Caco-2 (cell line): ENCODE measurements at regions of chr19 and their contacts with region 1.

Region 1: DNA sequence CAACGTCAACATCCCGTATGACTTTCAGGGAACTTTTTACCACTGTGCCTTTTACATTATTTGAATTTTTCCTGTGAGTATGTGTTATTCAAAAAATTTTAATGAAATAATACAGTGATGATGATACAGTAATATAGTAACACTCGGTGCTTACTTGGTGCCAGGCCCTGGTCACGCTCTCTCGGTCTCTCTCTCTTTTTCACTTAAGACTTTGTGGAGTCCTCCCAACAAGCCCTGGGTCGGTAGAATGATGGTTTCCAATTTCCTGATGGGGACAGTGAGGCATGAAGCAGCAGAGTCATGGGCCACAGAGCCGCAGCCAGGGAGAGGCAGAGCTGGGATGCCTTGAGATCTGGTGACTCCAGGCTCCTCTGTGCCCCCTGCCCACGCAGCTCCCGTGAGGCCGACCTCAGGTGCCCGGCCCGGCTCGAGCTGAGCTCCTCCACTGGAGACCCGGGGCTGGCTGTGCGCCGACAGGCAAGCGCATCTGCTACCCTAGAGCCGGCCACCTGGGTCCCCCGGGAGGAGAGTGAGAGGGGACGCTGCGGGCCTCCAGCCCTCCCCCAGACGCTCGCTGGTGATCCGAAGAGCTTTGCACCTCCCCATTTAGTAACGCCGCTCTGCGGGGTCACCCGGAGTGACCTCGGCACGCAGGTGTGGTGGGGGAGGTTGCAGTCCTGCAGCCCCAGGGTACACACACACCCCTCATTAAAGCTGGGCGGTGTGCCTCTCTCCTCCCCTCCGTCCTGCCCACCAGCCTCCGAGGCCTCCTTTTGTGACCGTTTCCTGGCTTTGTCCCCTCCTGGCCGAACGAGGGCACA is 4.4 kb upstream of the SBK3 start:
- DNase-seq: peak; percentile 80 to 85
- H3K4me3 ChIP-seq: peak overlapping the region; percentile 35
- H3K4me3 Mint-ChIP-seq: peak overlapping the region; percentile 81
- H3K27ac Mint-ChIP-seq: peak overlapping the region; percentile 84
- H3K4me1 ChIP-seq: peaks cover 34% of the 10 kb centered on the region
- H3K4me1 Mint-ChIP-seq: peaks cover 50% of the 10 kb centered on the region
- H3K27me3 ChIP-seq: no peaks in the 10 kb centered on the region
- H3K27me3 Mint-ChIP-seq: no peaks in the 10 kb centered on the region
- CTCF ChIP-seq: peak; percentile 29 to 32

Region 2: GRCh38 chr19:55160128-55160985 is 389.4 kb before region 1 on chr19:
- CTCF ChIA-PET with region 1: no interaction called
- POLR2A ChIA-PET with region 1: interaction called, 19 read pairs
- intact Hi-C with region 1: no loop called
- DNase-seq: peak; percentile 95 to 97
- H3K4me3 ChIP-seq: no peak overlapping the region
- H3K4me3 Mint-ChIP-seq: no peak overlapping the region
- H3K27ac Mint-ChIP-seq: no peak overlapping the region
- H3K4me1 ChIP-seq: peaks cover 16% of the 10 kb centered on the region
- H3K4me1 Mint-ChIP-seq: peaks cover 20% of the 10 kb centered on the region
- H3K27me3 ChIP-seq: no peaks in the 10 kb centered on the region
- H3K27me3 Mint-ChIP-seq: peaks cover 3% of the 10 kb centered on the region
- CTCF ChIP-seq: peak; percentile 97

Region 3: GRCh38 chr19:55437410-55438075 is 112.2 kb before region 1 on chr19:
- CTCF ChIA-PET with region 1: no interaction called
- POLR2A ChIA-PET with region 1: no interaction called
- intact Hi-C with region 1: no loop called
- DNase-seq: peak; percentile 76 to 83
- H3K4me3 ChIP-seq: no peak overlapping the region
- H3K4me3 Mint-ChIP-seq: peak overlapping the region; percentile 23
- H3K27ac Mint-ChIP-seq: no peak overlapping the region
- H3K4me1 ChIP-seq: peaks cover 11% of the 10 kb centered on the region; the same call in 1 of the 2 replicates
- H3K4me1 Mint-ChIP-seq: no peaks in the 10 kb centered on the region
- H3K27me3 ChIP-seq: peaks cover 5% of the 10 kb centered on the region
- H3K27me3 Mint-ChIP-seq: peaks cover 23% of the 10 kb centered on the region
- CTCF ChIP-seq: no peak

Region 4: DNA sequence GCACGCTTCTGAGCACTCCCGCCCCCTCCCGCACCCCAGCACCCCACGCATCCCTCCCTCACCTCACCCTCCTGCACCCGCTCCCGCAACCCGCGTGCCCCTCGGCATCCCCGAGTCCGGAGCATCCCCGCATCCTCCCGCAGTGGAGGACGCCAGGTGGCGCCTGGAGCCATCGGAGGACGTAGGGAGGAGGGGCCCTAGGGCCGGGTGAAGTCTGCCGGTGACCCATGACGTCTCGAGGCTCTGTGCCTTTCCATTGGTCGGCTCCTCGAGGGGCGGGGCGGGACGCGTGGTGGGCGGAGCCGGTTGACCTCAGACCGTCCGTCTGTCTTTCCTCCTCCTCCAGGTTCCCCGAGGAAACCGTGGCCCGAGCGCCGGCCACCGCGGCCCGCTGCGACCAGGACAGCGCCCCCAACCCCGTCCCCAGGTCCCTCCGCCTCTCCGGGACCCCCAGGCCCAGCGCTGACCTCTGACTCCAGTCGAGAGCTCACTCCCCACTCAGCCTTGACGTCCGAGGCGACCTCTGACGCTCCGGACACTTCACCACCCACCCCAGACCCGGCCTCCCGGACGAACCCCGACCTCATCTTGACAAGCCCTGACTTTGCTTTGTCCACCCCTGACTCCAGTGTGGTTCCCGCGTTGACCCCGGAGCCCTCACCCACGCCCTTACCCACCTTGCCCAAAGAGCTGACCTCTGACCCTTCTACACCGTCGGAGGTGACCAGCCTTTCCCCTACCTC is 32.7 kb before region 1 on chr19:
- CTCF ChIA-PET with region 1: interaction called, 6 read pairs
- POLR2A ChIA-PET with region 1: interaction called, 3 read pairs
- intact Hi-C with region 1: loop called (anchors 1 kb)
- DNase-seq: peak; percentile 94 to 97
- H3K4me3 ChIP-seq: peak overlapping the region; percentile 31
- H3K4me3 Mint-ChIP-seq: peak overlapping the region; percentile 72
- H3K27ac Mint-ChIP-seq: peak overlapping the region; percentile 77
- H3K4me1 ChIP-seq: peaks cover 8% of the 10 kb centered on the region
- H3K4me1 Mint-ChIP-seq: no peaks in the 10 kb centered on the region
- H3K27me3 ChIP-seq: no peaks in the 10 kb centered on the region
- H3K27me3 Mint-ChIP-seq: peaks cover 5% of the 10 kb centered on the region
- CTCF ChIP-seq: peak; percentile 89 to 98

Region 5: GRCh38 chr19:55563261-55563690 is 13.6 kb after region 1 on chr19:
- CTCF ChIA-PET with region 1: no interaction called
- POLR2A ChIA-PET with region 1: no interaction called
- intact Hi-C with region 1: no loop called
- DNase-seq: no peak
- H3K4me3 ChIP-seq: no peak overlapping the region
- H3K4me3 Mint-ChIP-seq: no peak overlapping the region
- H3K27ac Mint-ChIP-seq: no peak overlapping the region
- H3K4me1 ChIP-seq: 0 out of 2 replicates have a peak, but pooled peaks cover 3% of the 10 kb centered on the region
- H3K4me1 Mint-ChIP-seq: no peaks in the 10 kb centered on the region
- H3K27me3 ChIP-seq: no peaks in the 10 kb centered on the region
- H3K27me3 Mint-ChIP-seq: no peaks in the 10 kb centered on the region
- CTCF ChIP-seq: no peak

Region 6: DNA sequence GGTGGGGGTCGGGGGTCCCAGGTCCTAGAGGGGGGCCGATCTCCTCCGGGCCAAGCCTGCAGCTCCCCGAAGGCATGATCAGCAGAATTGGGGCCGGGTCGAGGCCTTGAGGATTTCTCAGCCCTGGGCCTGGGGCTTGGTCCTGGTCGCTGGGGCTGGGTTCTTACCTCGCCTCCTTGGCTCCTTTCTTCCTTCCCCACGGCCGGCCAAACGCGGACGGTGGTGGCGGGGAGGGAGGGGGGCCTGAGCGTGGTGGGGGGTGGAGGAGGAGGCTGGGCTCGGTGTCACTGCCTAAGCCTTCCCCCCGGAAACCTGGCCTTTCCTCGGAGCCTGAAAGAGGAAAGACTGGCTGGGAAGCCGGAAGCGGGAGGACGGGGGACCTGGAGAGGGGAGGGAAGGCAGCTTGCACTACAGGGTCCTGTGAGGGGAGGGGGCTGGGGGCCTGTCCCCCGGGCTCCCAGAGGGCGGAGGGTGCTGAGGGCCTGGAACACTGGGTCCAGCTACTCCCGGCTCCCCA is 31.0 kb after region 1 on chr19 and contains the start of gene ZNF579:
- CTCF ChIA-PET with region 1: interaction called, 7 read pairs
- POLR2A ChIA-PET with region 1: interaction called, 6 read pairs
- intact Hi-C with region 1: loop called (anchors 1 kb)
- DNase-seq: peak; percentile 93
- H3K4me3 ChIP-seq: peak within 1 kb of the TSS; percentile 68
- H3K4me3 Mint-ChIP-seq: peak within 1 kb of the TSS; percentile 85
- H3K27ac Mint-ChIP-seq: peak within 1 kb of the TSS; percentile 46
- H3K4me1 ChIP-seq: peaks cover 19% of the 10 kb centered on the region
- H3K4me1 Mint-ChIP-seq: peaks cover 27% of the 10 kb centered on the region
- H3K27me3 ChIP-seq: no peaks in the 10 kb centered on the region
- H3K27me3 Mint-ChIP-seq: no peaks in the 10 kb centered on the region
- CTCF ChIP-seq: no peak
- total RNA-seq, gene ZNF579: 26.5 and 30.4 TPM in 2 replicates

Region 7: GRCh38 chr19:55599468-55600279 is 50.0 kb after region 1 on chr19 and contains the start of gene FIZ1:
- CTCF ChIA-PET with region 1: interaction called, 4 read pairs
- POLR2A ChIA-PET with region 1: interaction called, 11 read pairs
- intact Hi-C with region 1: no loop called
- DNase-seq: peak; percentile 99
- H3K4me3 ChIP-seq: peak within 1 kb of the TSS; percentile 70
- H3K4me3 Mint-ChIP-seq: peak within 1 kb of the TSS; percentile 87
- H3K27ac Mint-ChIP-seq: peak within 1 kb of the TSS; percentile 98
- H3K4me1 ChIP-seq: peaks cover 5% of the 10 kb centered on the region
- H3K4me1 Mint-ChIP-seq: peaks cover 14% of the 10 kb centered on the region
- H3K27me3 ChIP-seq: no peaks in the 10 kb centered on the region
- H3K27me3 Mint-ChIP-seq: no peaks in the 10 kb centered on the region
- CTCF ChIP-seq: no peak
- total RNA-seq, gene FIZ1: 27.2 and 27.7 TPM in 2 replicates

Region 8: GRCh38 chr19:55670280-55671053 is 120.8 kb after region 1 on chr19:
- CTCF ChIA-PET with region 1: no interaction called
- POLR2A ChIA-PET with region 1: no interaction called
- intact Hi-C with region 1: no loop called
- DNase-seq: peak in 1 of 2 experiments; percentile 68
- H3K4me3 ChIP-seq: no peak overlapping the region
- H3K4me3 Mint-ChIP-seq: peak overlapping the region; percentile 34
- H3K27ac Mint-ChIP-seq: peak overlapping the region; percentile 83
- H3K4me1 ChIP-seq: peaks cover 49% of the 10 kb centered on the region
- H3K4me1 Mint-ChIP-seq: peaks cover 50% of the 10 kb centered on the region
- H3K27me3 ChIP-seq: no peaks in the 10 kb centered on the region
- H3K27me3 Mint-ChIP-seq: no peaks in the 10 kb centered on the region
- CTCF ChIP-seq: no peak